ENCODE measurements at regions of chr17 and their contacts with region 1.

Region 1: DNA sequence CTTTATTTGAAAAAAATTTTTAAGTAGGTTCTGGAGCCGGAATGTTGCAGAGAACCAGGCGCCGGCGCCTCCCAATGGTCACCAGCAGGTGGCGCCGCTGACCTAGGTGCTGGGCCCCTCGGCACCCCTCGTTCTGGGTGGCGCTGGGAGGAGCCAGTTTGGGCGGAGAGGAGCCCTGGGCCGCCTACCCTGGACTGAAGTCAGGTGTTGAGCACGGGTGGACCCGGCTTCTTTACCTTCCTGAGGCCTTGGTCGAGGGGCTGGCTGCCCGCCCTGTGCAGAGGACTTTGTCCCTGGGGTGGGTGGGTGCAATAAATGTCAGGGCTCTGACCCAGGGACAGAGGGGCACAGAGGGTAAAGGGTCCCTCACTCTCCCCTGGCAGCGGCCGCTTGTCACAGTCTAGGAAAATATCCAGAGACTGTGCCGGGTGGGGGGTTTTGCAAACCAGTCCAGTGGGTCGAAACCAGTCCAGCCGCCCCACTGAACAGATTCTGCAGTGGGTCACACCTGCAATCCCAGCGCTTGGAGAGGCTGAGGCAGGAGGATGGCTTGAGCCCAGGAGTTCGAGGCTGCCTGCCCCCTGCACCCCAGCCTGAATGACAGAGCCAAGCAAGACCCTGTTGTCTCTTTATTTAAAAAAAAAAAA is 30.1 kb upstream of the TNFRSF13B start:
- DNase-seq: peak; percentile 65 to 85
- H3K4me3 ChIP-seq: no peak overlapping the region
- H3K27ac ChIP-seq: no peak overlapping the region
- H3K4me1 ChIP-seq: peaks cover 0 to 30% (median 23%) of the 10 kb centered on the region in 4 donors
- H3K27me3 ChIP-seq: peaks cover 0 to 7% of the 10 kb centered on the region in 2 donors
- CTCF ChIP-seq: peak; percentile 92 to 99

Region 2: DNA sequence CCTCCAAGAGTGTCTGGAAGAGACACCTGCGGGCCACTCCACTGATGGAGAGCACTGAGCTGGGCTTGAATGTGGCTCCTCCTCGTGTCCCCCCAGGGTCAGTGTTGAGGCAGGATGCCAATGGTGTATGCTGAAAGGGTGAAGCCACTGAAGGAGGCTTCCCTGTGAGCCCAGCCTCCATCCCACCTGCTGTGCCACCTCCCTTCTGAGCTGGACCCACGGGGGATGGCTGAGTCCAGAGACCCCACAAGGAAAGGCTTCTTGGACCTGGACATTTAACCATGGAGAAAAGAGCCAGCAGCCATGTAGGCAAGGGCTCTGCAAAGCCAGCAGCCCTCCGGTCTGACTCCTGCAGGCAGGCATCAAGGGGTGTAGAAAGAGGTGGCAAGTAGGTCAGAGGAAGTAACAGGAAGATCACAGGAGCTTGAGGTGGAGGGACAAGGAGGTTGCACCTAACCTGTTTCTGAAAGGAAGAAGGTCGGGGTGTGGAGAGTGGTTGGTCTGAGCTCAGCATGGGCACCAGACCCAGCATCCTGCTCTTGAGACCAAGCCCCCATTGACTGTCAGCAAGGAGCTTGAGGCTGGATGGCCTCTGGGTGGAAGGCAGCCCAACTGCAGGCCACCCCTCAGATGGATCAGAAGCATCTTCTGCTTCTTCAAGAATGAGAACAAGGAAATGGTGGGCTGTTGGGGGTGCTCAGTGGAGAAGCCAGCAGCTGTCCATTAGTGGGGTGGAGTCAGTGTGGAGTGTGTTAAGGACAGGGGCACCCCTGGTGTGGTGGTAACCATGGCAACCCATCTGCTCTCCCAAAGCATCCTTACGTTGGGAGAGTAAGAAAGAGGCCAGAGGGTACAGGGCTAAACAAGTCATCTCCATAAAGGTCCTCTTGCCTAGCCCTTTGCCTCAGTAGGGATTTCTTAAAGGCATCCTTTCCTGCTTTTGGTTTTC is 123.4 kb after region 1 on chr17:
- intact Hi-C with region 1: loop called (anchors 10 kb)
- DNase-seq: no peak
- H3K4me3 ChIP-seq: no peak overlapping the region
- H3K27ac ChIP-seq: peak overlapping the region; percentile 76 to 83
- H3K4me1 ChIP-seq: peaks cover 0 to 87% (median 60%) of the 10 kb centered on the region in 4 donors
- H3K27me3 ChIP-seq: no peaks in the 10 kb centered on the region
- CTCF ChIP-seq: no peak

Region 3: GRCh38 chr17:17206124-17206912 is 204.3 kb after region 1 on chr17 and contains the start of gene PLD6:
- intact Hi-C with region 1: loop called (anchors 10 kb)
- DNase-seq: peak; percentile 59 to 89
- H3K4me3 ChIP-seq: peak within 1 kb of the TSS; percentile 47 to 62
- H3K27ac ChIP-seq: peak within 1 kb of the TSS; percentile 75 to 84
- H3K4me1 ChIP-seq: peaks cover 6 to 44% (median 39%) of the 10 kb centered on the region in 4 donors
- H3K27me3 ChIP-seq: no peaks in the 10 kb centered on the region
- CTCF ChIP-seq: no peak

Region 4: GRCh38 chr17:17237026-17237799 is 235.2 kb after region 1 on chr17 and contains the start of gene FLCN:
- intact Hi-C with region 1: loop called (anchors 10 kb)
- DNase-seq: peak; percentile 92 to 95
- H3K4me3 ChIP-seq: peak within 1 kb of the TSS; percentile 90 to 95
- H3K27ac ChIP-seq: peak within 1 kb of the TSS; percentile 93 to 96
- H3K4me1 ChIP-seq: peaks cover 0 to 35% (median 18%) of the 10 kb centered on the region in 4 donors
- H3K27me3 ChIP-seq: no peaks in the 10 kb centered on the region
- CTCF ChIP-seq: peak in 1 of 2 experiments; percentile 42

Region 5: DNA sequence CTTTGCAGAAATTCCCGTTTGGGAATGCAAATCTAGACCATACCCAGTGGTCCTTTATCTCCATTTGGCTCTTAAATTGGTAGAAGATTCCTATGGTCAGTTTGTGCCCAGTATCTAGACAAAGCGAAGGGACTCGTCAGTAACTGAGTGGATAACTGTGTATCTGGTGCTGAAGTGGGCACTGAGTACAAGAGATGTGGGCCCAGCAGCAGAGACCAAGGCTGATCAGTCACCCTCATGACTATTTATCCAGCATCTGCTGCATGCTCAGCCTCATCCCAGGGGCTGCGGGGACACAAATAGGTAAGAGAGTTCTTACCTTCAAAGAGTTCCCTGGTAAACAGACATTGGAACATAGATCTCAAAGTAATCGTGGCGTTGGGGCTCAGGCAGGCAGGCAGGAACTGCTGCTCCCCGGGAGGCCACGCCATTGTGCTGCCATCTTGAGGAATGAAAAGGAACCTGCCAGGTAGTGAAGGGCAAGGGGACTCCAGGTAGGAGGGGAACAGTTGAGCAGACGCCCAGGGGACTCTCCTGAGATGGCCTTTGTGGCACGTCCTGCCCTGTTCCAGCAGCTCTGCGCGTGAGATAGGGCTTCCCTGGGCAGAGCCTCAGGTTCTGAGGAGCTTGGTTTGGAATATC is 311.5 kb after region 1 on chr17:
- intact Hi-C with region 1: loop called (anchors 5 kb)
- DNase-seq: peak in 1 of 2 donors; percentile 60
- H3K4me3 ChIP-seq: no peak overlapping the region
- H3K27ac ChIP-seq: no peak overlapping the region
- H3K4me1 ChIP-seq: no peaks in the 10 kb centered on the region
- H3K27me3 ChIP-seq: no peaks in the 10 kb centered on the region
- CTCF ChIP-seq: peak; percentile 19 to 22

Measured in tibial artery (tissue), 4 donors.